ENCODE measurements at regions of chr2 and their contacts with region 1.

Region 1: GRCh38 chr2:30165050-30165520 is 18.3 kb downstream of the YPEL5 start:
- DNase-seq: peak; percentile 83
- H3K4me3 Mint-ChIP-seq: no peak overlapping the region
- H3K27ac Mint-ChIP-seq: no peak overlapping the region
- H3K4me1 Mint-ChIP-seq: peaks cover 6% of the 10 kb centered on the region
- H3K27me3 Mint-ChIP-seq: no peaks in the 10 kb centered on the region

Region 2: GRCh38 chr2:30146438-30147147 is 18.5 kb before region 1 on chr2 and contains the start of gene YPEL5:
- CTCF ChIA-PET with region 1: interaction called, 72 read pairs
- POLR2A ChIA-PET with region 1: interaction called, 3 read pairs
- DNase-seq: peak; percentile 99
- H3K4me3 Mint-ChIP-seq: peak within 1 kb of the TSS; percentile 81
- H3K27ac Mint-ChIP-seq: peak within 1 kb of the TSS; percentile 99
- H3K4me1 Mint-ChIP-seq: peaks cover 44% of the 10 kb centered on the region
- H3K27me3 Mint-ChIP-seq: no peaks in the 10 kb centered on the region
- total RNA-seq, gene YPEL5: 32.3 to 39.2 TPM

Region 3: DNA sequence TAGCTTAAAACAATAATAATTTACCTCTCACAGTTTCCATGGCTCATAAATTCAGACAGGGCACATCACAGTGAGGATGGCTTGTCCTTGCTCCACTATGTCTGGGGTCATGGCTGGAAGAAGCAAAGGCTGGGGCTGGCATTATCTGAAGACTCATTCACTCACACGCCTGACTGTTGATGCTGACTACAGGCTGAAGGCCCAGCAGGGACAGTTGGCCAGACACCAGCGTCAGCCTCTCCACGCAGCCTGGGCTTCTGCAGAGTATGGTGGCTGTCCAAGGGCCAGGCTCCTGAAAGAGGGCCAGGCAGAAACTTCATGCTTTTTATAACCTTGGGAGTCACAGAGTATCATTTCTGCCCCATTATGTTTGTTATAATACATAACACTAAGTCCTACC is 15.1 kb after region 1 on chr2:
- CTCF ChIA-PET with region 1: interaction called, 13 read pairs
- POLR2A ChIA-PET with region 1: no interaction called
- DNase-seq: no peak
- H3K4me3 Mint-ChIP-seq: no peak overlapping the region
- H3K27ac Mint-ChIP-seq: no peak overlapping the region
- H3K4me1 Mint-ChIP-seq: peaks cover 2% of the 10 kb centered on the region
- H3K27me3 Mint-ChIP-seq: no peaks in the 10 kb centered on the region

Region 4: DNA sequence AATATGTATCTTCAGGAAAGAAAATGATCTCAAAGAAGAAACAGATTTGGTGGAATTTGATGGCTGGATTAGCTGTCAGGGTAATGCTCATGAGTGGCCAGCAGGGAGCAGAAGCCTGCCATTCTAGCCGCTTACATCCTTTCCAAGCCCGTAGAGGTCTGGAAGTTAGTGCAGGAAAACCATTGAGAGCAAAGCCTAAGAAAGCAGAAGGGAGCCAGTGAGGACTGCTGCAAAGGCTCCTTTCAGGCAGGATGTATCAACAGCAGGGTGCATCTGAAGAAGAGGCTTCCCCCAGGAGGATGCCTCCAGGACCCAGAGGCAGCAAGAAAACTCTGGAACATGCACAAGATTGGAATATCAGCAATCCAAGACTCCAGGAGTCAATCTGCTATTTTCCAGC is 43.4 kb after region 1 on chr2:
- CTCF ChIA-PET with region 1: interaction called, 10 read pairs
- POLR2A ChIA-PET with region 1: no interaction called
- DNase-seq: peak; percentile 42
- H3K4me3 Mint-ChIP-seq: no peak overlapping the region
- H3K27ac Mint-ChIP-seq: peak overlapping the region; percentile 68
- H3K4me1 Mint-ChIP-seq: peaks cover 20% of the 10 kb centered on the region
- H3K27me3 Mint-ChIP-seq: peaks cover 3% of the 10 kb centered on the region

Region 5: GRCh38 chr2:30217644-30218337 is 52.7 kb after region 1 on chr2:
- CTCF ChIA-PET with region 1: interaction called, 10 read pairs
- POLR2A ChIA-PET with region 1: no interaction called
- DNase-seq: no peak
- H3K4me3 Mint-ChIP-seq: no peak overlapping the region
- H3K27ac Mint-ChIP-seq: no peak overlapping the region
- H3K4me1 Mint-ChIP-seq: peaks cover 13% of the 10 kb centered on the region
- H3K27me3 Mint-ChIP-seq: peaks cover 3% of the 10 kb centered on the region

Region 6: GRCh38 chr2:30798536-30798991 is 633.5 kb after region 1 on chr2:
- CTCF ChIA-PET with region 1: no interaction called
- POLR2A ChIA-PET with region 1: no interaction called
- DNase-seq: no peak
- H3K4me3 Mint-ChIP-seq: no peak overlapping the region
- H3K27ac Mint-ChIP-seq: peak overlapping the region; percentile 74
- H3K4me1 Mint-ChIP-seq: peaks cover 12% of the 10 kb centered on the region
- H3K27me3 Mint-ChIP-seq: peaks cover 11% of the 10 kb centered on the region